ENCODE measurements at regions of chr18 and their contacts with region 1.

Region 1: GRCh38 chr18:48777026-48777743 is 173.6 kb downstream of the SMAD7 start:
- DNase-seq: peak; percentile 88

Region 2: GRCh38 chr18:48663931-48664847 is 113.0 kb before region 1 on chr18:
- intact Hi-C with region 1: no loop called
- DNase-seq: peak; percentile 90

Region 3: DNA sequence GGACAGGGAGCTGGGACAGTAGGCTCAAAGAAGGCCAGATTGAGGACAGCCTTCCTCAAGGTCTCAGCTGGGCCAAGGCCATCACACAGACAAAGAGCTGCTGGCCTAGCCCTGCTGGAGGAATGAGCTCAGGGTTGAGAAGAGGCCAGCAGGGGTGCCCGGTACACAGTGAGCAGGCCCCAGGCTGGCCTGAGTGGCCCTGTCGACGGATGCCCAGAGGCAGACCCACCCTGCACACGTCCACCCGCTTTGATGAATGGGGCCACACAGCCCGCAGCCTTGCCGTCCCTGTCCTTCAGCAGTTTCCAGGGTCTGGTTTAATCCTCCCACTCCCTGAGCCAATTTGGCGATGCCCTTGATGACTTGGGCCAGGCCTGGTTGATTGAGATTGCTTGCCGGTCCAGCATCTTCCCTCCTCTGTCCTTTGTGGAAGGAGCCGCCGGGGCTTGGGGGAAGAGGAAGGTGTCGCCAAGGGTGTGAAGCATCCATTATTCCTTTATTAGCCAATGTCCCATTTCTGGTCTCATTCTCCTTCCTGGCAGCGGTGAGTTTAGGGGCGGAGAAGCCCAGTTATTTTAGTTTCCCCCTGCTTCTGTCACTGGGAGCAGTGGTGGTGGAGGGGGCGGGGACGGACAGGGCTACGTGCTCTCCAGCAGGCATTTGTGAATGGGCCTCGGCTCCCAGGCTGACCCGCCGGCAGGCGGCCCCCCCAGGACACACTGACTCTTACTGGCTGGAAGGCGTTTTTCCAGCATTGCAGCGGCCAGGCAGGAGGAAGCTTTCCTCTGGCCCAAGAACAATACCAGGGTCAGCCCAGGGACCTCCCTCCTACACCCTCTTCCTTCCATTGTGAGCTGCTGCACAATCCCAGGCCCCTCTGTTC is 96.6 kb before region 1 on chr18:
- intact Hi-C with region 1: loop called in 1 of 2 experiments (anchors 10 kb)
- DNase-seq: peak; percentile 97

Region 4: GRCh38 chr18:49041435-49042245 is 264.5 kb after region 1 on chr18:
- intact Hi-C with region 1: loop called in 1 of 2 experiments (anchors 10 kb)
- DNase-seq: no peak

Region 5: GRCh38 chr18:49189772-49190171 is 412.6 kb after region 1 on chr18:
- intact Hi-C with region 1: loop called in 1 of 2 experiments (anchors 10 kb)
- DNase-seq: no peak

Measured in posterior vena cava (tissue), 2 donors.